Heart left ventricle (tissue), 16 donors: ENCODE measurements at regions of chr11 and their contacts with region 1.

Region 1: DNA sequence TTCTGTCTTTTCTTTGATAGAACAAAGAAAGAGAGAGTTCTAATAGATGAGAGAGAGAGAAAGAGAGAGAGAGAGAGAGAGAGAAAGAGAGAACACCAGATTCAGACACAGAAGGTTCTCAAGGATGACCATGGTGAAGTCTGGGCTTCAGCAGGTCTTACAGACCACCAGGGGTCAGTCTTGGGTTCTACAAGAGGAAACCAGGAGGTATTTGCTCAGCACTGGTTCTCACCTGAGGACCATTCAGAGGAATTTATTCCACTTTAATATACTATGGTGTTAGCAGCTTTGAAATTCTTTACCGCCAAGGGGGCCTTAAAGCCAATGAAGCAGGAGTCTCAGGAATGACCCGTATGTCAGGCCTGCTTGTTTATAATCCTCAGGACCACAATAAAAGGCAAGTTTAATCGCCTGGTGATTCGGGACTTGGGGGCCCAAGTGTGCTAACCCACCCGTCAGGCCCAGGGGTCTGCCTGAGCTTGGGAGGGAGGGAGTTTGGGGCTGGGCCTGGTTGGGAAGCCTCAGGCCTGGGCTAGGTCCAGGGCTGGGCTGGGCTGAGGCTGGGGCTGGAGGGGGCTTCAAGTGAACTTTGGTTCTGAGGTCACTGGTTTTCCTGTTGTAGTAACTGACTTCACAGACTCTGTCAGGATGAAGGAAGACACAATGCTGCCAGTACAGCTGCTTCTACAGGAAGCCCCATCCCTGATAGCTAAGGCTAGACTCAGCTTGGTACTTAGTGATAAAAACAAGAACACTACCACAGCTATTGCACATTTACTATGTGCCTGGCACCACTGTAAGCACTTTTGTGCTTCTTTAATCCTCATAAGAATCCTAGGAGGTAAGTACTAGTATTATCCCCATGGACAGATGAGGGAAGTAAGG is 179.2 kb upstream of the ZBED5 start:
- DNase-seq: peak in 2 of 5 donors; percentile 39
- ATAC-seq: peak; percentile 68 to 88 (median 78)
- H3K4me3 ChIP-seq: no peak overlapping the region
- H3K27ac ChIP-seq: peak overlapping the region in 1 of 12 donors; percentile 75
- H3K4me1 ChIP-seq: no peaks in the 10 kb centered on the region
- H3K27me3 ChIP-seq: no peaks in the 10 kb centered on the region
- CTCF ChIP-seq: peak; percentile 66 to 88 (median 80)
- POLR2A ChIP-seq: no peak

Region 2: GRCh38 chr11:10893714-10894151 is 143.4 kb before region 1 on chr11:
- intact Hi-C with region 1: no loop called
- DNase-seq: peak in 2 of 5 donors; percentile 47
- ATAC-seq: peak in 3 of 4 donors; percentile 76 to 82 (median 77)
- H3K4me3 ChIP-seq: no peak overlapping the region
- H3K27ac ChIP-seq: peak overlapping the region in 11 of 12 donors; percentile 14 to 83 (median 64)
- H3K4me1 ChIP-seq: peaks cover 0 to 34% (median 19%) of the 10 kb centered on the region in 12 donors
- H3K27me3 ChIP-seq: no peaks in the 10 kb centered on the region
- CTCF ChIP-seq: peak in 8 of 12 donors; percentile 5 to 34 (median 22)
- POLR2A ChIP-seq: no peak

Region 3: GRCh38 chr11:11148104-11148509 is 111.0 kb after region 1 on chr11:
- intact Hi-C with region 1: loop called in 2 of 10 experiments (anchors 10 kb)
- DNase-seq: peak; percentile 65 to 89 (median 81)
- ATAC-seq: peak; percentile 97 to 99 (median 98)
- H3K4me3 ChIP-seq: no peak overlapping the region
- H3K27ac ChIP-seq: peak overlapping the region in 10 of 12 donors; percentile 4 to 82 (median 63)
- H3K4me1 ChIP-seq: peaks cover 0 to 22% (median 10%) of the 10 kb centered on the region in 12 donors
- H3K27me3 ChIP-seq: no peaks in the 10 kb centered on the region
- CTCF ChIP-seq: peak in 7 of 12 donors; percentile 22 to 59 (median 51)
- POLR2A ChIP-seq: no peak

Region 4: GRCh38 chr11:11157185-11157584 is 120.1 kb after region 1 on chr11:
- intact Hi-C with region 1: loop called in 4 of 10 experiments (anchors 2 to 10 kb)
- DNase-seq: peak in 1 of 5 donors; percentile 43
- ATAC-seq: peak in 1 of 4 donors; percentile 60
- H3K4me3 ChIP-seq: no peak overlapping the region
- H3K27ac ChIP-seq: no peak overlapping the region
- H3K4me1 ChIP-seq: peaks cover 0 to 7% (median 0%) of the 10 kb centered on the region in 12 donors
- H3K27me3 ChIP-seq: no peaks in the 10 kb centered on the region
- CTCF ChIP-seq: peak in 9 of 12 donors; percentile 25 to 51 (median 35)
- POLR2A ChIP-seq: no peak

Region 5: DNA sequence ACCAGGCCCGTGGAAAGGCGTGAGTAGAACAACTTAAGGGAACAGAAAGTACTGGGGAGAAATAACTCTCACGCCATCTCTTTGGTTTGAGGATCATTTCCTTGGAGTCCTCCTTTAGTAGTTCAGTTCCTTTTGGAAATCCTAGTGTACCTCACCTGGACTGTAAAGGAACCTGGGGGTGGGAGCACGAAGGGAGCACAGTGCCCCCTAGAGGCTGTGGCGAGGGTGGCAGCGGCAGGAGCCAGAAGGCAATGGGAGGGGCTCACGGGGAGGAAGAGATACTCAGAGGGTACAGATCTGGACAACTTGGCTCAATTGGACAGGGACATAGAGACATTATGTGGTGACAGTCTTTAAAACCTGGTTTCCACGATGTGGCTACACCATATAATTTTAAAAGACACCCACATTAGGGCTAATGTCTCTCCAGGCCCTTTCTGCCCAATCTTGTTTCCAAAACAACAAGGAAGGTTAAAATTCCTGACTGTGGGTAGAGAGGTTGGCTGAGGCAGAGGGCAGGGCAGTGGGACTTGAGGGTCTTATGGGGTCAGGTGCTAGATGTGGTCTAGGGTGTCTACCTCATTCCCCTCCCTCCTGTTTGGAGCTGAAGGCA is 229.0 kb after region 1 on chr11:
- intact Hi-C with region 1: loop called (anchors 2 to 10 kb)
- DNase-seq: peak in 1 of 5 donors; percentile 37
- ATAC-seq: peak in 3 of 4 donors; percentile 58 to 73 (median 66)
- H3K4me3 ChIP-seq: no peak overlapping the region
- H3K27ac ChIP-seq: no peak overlapping the region
- H3K4me1 ChIP-seq: peaks cover 0 to 13% (median 6%) of the 10 kb centered on the region in 12 donors
- H3K27me3 ChIP-seq: no peaks in the 10 kb centered on the region
- CTCF ChIP-seq: peak; percentile 62 to 87 (median 78)
- POLR2A ChIP-seq: no peak

Region 6: GRCh38 chr11:11391796-11392195 is 354.7 kb after region 1 on chr11:
- intact Hi-C with region 1: loop called in 1 of 10 experiments (anchors 10 kb)
- DNase-seq: no peak
- ATAC-seq: peak in 2 of 4 donors; percentile 7 to 48
- H3K4me3 ChIP-seq: no peak overlapping the region
- H3K27ac ChIP-seq: no peak overlapping the region
- H3K4me1 ChIP-seq: peaks cover 0 to 30% (median 11%) of the 10 kb centered on the region in 12 donors
- H3K27me3 ChIP-seq: no peaks in the 10 kb centered on the region
- CTCF ChIP-seq: no peak
- POLR2A ChIP-seq: no peak

Region 7: DNA sequence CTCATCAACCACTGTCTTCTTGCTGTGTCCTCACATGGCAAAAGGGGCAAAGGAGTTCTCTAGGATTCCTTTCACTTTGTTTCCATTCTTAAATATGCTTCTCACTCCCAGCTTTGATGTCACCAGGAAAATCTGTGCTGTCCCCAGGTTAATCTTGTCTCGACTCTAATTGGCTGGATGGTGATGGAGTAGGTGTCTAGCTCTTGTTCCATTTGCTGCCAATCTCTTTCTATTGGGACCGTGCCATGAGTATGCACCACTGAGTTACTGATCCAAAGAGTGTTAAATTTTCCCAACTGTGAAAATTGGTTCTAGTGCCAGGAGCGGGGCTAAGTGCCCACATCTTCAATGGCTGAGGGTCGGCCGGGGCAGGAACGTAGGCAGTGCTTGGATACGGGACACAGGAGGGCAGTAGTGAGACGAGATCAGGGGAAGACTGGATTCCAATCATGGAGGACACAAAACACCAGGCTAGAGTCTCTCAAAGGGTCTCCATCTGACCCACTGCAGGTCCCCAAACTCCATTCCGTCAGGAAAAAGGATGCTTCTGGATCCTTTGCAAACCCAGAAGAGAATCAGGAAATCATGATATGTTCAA is 363.6 kb after region 1 on chr11:
- intact Hi-C with region 1: loop called in 3 of 10 experiments (anchors 10 kb)
- DNase-seq: no peak
- ATAC-seq: no peak
- H3K4me3 ChIP-seq: no peak overlapping the region
- H3K27ac ChIP-seq: no peak overlapping the region
- H3K4me1 ChIP-seq: peaks cover 0 to 43% (median 10%) of the 10 kb centered on the region in 12 donors
- H3K27me3 ChIP-seq: no peaks in the 10 kb centered on the region
- CTCF ChIP-seq: peak in 7 of 12 donors; percentile 6 to 36 (median 19)
- POLR2A ChIP-seq: no peak